Activated T-helper 1 cell treated with anti-CD3 and anti-CD28 coated beads, Interleukin-12 subunit alpha, Interleukin-12 subunit beta, Interleukin-2, Interleukin-4 antibody, amounts not matched to agents 30 ng/mL and 10 ng/mL and 1 ng/mL, durations not matched to agents 14 hours and 24 hours and 36 hours (primary cell): ENCODE measurements at regions of chr16 and their contacts with region 1.

Region 1: DNA sequence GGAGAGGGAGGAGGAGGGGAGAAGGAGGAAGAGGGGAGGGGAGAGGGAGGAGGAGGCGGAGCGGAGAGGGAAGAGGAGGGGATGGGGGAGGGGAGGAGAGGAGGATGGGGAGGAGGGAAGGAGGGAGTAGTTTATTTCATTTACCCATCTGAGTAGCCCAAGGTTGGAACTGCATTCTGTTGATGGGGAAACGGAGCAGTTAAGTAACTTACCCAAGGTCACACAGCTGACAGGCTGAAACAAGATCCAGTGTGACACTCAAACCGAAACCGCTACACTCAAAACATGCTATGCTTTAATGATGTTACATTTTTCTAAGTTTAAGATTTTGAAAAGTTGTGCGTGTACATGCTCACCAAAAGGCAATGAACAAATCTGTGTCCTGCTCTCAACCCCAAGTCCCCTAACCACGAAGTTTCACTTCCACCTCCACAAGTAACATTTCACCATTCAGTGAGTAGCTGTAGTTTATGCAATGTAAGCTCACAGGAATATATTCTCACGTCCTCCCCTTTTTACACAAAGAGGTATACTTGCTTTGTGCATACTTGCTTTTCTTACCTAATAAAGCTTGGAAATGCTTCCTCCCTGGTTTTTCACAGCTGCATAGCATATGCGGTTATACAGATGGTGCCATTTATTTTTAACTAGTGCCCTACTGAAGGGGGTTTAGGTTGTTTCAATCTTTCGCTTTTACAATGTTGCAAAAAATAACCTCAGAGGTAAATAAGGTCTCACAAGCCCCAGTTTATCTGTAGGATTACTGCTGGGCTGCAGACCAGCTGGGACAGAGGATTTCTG is 275.3 kb downstream of the PARN start:
- DNase-seq: peak; percentile 24
- H3K4me3 Mint-ChIP-seq: peak overlapping the region; percentile 8
- H3K27ac Mint-ChIP-seq: no peak overlapping the region
- H3K4me1 Mint-ChIP-seq: peaks cover 10% of the 10 kb centered on the region
- H3K27me3 Mint-ChIP-seq: peaks cover 21% of the 10 kb centered on the region

Region 2: GRCh38 chr16:14205666-14206065 is 149.1 kb before region 1 on chr16:
- intact Hi-C with region 1: no loop called
- DNase-seq: no peak
- H3K4me3 Mint-ChIP-seq: no peak overlapping the region
- H3K27ac Mint-ChIP-seq: no peak overlapping the region
- H3K4me1 Mint-ChIP-seq: peaks cover 11% of the 10 kb centered on the region
- H3K27me3 Mint-ChIP-seq: no peaks in the 10 kb centered on the region

Region 3: DNA sequence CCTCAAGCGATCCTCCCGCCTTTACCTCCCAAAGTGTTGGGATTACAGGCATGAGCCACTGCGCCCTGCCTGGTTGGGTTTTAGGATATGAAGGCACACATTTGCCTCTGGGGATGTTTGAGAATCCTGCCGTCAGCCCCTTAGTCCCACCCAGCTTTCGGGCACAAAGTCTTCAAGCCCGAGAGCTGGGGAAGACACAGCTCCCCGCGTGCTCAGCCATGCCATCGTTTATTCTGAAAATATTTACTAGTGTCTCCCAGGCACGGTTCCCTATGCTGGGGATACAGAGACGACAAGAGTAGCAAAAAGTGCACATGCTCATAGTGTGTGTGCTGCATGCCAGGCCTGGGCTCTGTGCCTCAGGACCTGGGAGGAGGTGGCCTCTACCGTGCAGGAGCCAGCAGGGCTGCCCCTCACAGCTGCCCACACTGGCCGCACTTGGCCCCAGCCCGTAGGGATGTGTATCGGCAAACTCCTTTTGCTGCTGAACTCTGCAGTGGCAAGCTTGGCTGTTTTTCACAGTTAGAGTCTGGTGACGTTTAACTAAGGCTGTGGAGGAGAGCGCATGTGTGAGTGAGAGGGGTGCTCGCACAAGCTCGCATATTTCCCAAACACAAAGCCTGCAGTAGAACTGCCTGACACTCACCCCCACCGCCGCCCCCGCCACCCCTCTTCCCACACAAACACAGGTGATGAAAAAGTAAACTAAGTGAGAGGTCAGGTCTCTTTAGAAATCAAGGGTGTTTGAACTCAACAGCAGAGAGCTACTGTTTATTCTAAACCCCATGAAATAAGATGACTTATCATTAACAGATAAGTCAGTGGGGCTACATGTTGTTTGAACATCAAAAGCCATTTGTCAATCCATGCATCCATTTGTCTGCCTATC is 17.2 kb before region 1 on chr16:
- intact Hi-C with region 1: no loop called
- DNase-seq: no peak
- H3K4me3 Mint-ChIP-seq: no peak overlapping the region
- H3K27ac Mint-ChIP-seq: no peak overlapping the region
- H3K4me1 Mint-ChIP-seq: no peaks in the 10 kb centered on the region
- H3K27me3 Mint-ChIP-seq: peaks cover 8% of the 10 kb centered on the region

Region 4: GRCh38 chr16:14399378-14400284 is 44.9 kb after region 1 on chr16:
- intact Hi-C with region 1: no loop called
- DNase-seq: no peak
- H3K4me3 Mint-ChIP-seq: no peak overlapping the region
- H3K27ac Mint-ChIP-seq: no peak overlapping the region
- H3K4me1 Mint-ChIP-seq: no peaks in the 10 kb centered on the region
- H3K27me3 Mint-ChIP-seq: no peaks in the 10 kb centered on the region

Region 5: DNA sequence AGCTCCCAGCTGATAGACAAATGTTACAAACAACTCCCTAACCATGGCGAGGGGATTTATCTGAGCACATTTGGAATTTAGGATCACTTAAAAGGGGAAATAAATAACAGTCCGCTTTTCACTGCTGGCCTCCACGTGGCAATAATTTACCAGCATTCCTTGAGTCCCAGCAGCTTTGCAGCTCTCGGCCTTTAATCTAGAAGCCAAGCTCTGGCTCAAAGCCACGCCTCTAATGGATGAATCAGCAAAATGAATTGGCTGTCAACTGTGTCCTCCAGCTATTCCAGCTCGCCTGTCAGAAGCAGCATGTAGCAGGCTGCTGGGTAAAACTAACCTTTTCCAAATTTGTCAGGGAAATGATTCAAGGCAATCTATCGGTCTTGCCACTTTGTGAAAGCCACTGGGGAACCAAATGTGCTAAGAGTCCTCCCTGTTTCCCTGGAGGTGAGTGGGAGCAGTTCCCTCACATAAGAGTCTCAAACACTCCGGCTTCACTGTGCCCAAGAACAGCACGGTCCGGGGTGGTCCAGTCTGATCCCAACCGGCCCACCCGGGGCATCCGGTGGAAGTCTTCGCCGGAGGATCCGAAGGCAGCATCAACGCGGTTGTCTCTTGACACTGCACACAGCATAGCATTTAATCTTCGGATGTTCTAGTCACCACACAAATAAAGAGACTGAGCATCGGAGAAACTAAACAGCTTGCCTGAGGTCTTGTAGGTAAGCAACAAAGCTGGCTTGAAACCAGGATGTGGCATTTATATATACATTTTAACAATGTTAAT is 132.0 kb after region 1 on chr16:
- intact Hi-C with region 1: no loop called
- DNase-seq: no peak
- H3K4me3 Mint-ChIP-seq: no peak overlapping the region
- H3K27ac Mint-ChIP-seq: no peak overlapping the region
- H3K4me1 Mint-ChIP-seq: peaks cover 7% of the 10 kb centered on the region
- H3K27me3 Mint-ChIP-seq: no peaks in the 10 kb centered on the region

Region 6: DNA sequence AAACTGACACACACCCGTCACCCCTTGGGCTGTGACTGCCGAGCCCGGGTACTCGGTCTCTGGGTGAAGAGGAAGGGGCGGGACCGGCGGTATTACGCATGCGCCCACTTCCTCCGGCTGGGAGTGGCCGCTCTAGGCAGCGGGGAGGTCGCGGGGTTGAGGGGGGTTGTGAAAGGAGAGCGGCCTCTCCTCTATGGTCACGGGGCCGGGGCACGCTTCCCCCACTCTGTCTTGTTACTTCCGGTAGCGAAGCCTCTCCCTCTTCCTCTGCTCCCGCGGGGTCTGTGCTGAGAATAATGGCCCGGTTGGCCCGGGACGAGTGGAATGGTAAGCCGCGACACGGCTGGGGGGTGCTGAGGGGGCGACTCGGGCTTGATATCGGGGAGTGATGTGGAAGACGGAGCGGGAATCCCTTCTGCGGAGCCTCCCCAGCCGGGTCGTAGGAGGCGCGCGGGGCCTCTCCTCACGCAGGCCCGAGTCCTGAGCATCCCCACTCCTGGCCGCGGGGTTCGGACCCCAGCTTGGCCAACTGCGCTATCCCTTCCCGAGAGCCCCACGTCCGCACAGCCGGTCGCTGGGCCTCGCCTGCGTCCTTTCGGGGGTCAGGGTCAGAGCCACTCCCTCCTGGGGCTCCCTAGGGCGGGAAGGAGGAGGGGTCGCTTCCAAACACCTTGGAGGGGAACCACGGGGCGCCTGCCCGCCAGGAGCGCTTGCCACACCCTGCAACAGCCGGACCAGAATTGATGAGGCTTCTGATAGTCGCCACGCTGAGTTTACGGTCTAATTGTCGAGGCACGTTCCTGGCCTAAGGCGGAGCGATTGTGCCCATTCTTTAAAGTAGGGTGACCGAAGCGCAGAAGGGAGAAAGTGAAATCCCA is 278.2 kb after region 1 on chr16 and contains the start of gene BFAR:
- intact Hi-C with region 1: loop called (anchors 5 kb)
- DNase-seq: peak; percentile 99
- H3K4me3 Mint-ChIP-seq: peak within 1 kb of the TSS; percentile 100
- H3K27ac Mint-ChIP-seq: peak within 1 kb of the TSS; percentile 100
- H3K4me1 Mint-ChIP-seq: peaks cover 60% of the 10 kb centered on the region
- H3K27me3 Mint-ChIP-seq: no peaks in the 10 kb centered on the region
- total RNA-seq, gene BFAR: 59.8 and 64.8 TPM in 2 replicates